Activated B cell treated with CpG ODN at 0.5 μM for 24 hours (primary cell): ENCODE measurements at regions of chr22 and their contacts with region 1.

Region 1: GRCh38 chr22:19970479-19971275 is 29.1 kb upstream of the TXNRD2 start:
- DNase-seq: peak; percentile 74
- ATAC-seq: peak; percentile 87
- H3K4me3 Mint-ChIP-seq: no peak overlapping the region
- H3K27ac Mint-ChIP-seq: no peak overlapping the region
- H3K4me1 Mint-ChIP-seq: peaks cover 9% of the 10 kb centered on the region
- H3K27me3 Mint-ChIP-seq: no peaks in the 10 kb centered on the region
- CTCF ChIP-seq: peak; percentile 43

Region 2: GRCh38 chr22:19705181-19705934 is 265.3 kb before region 1 on chr22:
- CTCF ChIA-PET with region 1: no interaction called
- POLR2A ChIA-PET with region 1: no interaction called
- intact Hi-C with region 1: no loop called
- DNase-seq: no peak
- ATAC-seq: no peak
- H3K4me3 Mint-ChIP-seq: no peak overlapping the region
- H3K27ac Mint-ChIP-seq: no peak overlapping the region
- H3K4me1 Mint-ChIP-seq: no peaks in the 10 kb centered on the region
- H3K27me3 Mint-ChIP-seq: no peaks in the 10 kb centered on the region
- CTCF ChIP-seq: no peak

Region 3: DNA sequence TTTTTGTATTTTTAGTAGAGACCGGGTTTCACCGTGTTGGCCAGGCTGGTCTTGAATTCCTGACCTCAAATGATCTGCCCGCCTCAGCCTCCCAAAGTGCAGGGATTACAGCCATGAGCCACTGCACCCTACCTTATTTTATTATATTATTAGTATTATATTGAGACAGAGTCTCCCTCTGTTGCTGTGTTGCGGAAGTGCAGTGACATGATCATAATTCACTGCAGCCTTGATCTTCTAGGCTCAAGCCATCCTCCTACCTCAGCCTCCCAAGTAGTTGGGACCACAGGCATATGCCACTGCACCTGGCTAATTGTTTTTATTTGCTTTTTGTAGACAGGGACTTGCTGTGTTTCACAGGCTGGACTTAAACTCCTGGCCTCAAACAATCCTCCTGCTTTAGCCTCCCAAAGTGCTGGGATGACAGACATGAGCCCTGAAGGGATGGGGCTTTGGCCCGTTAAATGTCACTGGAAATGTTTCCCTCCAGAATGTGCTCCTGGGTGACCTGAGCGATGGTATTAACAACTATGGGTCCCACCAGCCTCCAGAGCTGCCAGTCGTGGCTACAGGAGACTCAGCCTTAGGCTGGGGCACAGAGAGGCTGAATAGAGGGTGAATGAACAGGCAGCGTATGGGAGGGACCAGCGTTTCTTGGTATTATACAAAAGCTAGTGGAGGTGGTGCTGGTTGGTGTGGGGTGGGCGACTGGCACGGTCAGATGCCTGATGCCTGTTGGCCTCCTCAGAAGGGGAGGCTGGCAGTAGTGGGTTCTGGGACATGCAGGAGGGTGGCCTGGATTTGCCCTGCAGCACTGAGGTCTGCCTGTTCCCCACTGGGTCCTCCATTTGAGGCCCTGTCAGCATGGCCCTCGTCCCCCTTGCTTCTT is 57.5 kb after region 1 on chr22:
- CTCF ChIA-PET with region 1: interaction called, 3 read pairs
- POLR2A ChIA-PET with region 1: interaction called, 3 read pairs
- intact Hi-C with region 1: loop called (anchors 1 kb)
- DNase-seq: no peak
- ATAC-seq: no peak
- H3K4me3 Mint-ChIP-seq: no peak overlapping the region
- H3K27ac Mint-ChIP-seq: no peak overlapping the region
- H3K4me1 Mint-ChIP-seq: peaks cover 54% of the 10 kb centered on the region
- H3K27me3 Mint-ChIP-seq: no peaks in the 10 kb centered on the region
- CTCF ChIP-seq: no peak

Region 4: DNA sequence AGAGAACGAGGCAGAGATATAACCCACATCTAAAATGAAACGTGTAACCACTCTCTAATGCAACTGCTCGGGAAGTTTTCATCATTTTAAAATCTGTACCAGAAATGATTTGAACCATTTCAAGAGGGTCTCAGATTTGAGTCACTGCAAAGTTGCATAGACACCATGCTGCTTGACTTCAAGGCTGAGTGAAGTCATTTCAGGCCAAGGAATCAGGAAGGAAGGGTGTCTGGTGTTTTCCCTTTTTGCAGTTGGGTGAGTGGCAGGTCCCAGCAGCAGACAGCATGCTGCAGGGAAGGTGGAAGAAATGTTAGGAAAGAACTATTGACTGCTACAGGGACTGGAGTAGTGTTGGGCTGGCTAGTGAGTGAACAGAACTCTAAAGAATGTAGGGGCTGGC is 66.7 kb after region 1 on chr22:
- CTCF ChIA-PET with region 1: interaction called, 3 read pairs
- POLR2A ChIA-PET with region 1: no interaction called
- intact Hi-C with region 1: loop called (anchors 2 kb)
- DNase-seq: no peak
- ATAC-seq: peak; percentile 26
- H3K4me3 Mint-ChIP-seq: peak overlapping the region; percentile 56
- H3K27ac Mint-ChIP-seq: peak overlapping the region; percentile 85
- H3K4me1 Mint-ChIP-seq: peaks cover 62% of the 10 kb centered on the region
- H3K27me3 Mint-ChIP-seq: no peaks in the 10 kb centered on the region
- CTCF ChIP-seq: no peak

Region 5: DNA sequence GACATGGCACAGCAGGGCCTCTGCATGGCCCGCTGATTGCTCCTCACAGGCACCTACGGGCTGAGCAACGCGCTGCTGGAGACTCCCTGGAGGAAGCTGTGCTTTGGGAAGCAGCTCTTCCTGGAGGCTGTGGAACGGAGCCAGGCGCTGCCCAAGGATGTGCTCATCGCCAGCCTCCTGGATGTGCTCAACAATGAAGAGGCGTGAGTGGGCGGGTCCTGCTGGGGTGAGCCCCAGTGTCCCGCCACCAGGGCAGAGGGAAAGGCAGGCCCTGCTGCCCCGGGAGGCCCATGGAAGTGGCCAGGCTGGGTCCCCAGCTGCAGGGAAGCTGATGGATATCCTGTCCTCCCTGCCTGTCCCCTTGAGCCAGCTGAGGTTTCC is 90.8 kb after region 1 on chr22:
- CTCF ChIA-PET with region 1: no interaction called
- POLR2A ChIA-PET with region 1: no interaction called
- intact Hi-C with region 1: no loop called
- DNase-seq: no peak
- ATAC-seq: no peak
- H3K4me3 Mint-ChIP-seq: no peak overlapping the region
- H3K27ac Mint-ChIP-seq: no peak overlapping the region
- H3K4me1 Mint-ChIP-seq: no peaks in the 10 kb centered on the region
- H3K27me3 Mint-ChIP-seq: no peaks in the 10 kb centered on the region
- CTCF ChIP-seq: no peak

Region 6: GRCh38 chr22:20093418-20094196 is 122.9 kb after region 1 on chr22:
- CTCF ChIA-PET with region 1: no interaction called
- POLR2A ChIA-PET with region 1: no interaction called
- intact Hi-C with region 1: no loop called
- DNase-seq: no peak
- ATAC-seq: no peak
- H3K4me3 Mint-ChIP-seq: no peak overlapping the region
- H3K27ac Mint-ChIP-seq: no peak overlapping the region
- H3K4me1 Mint-ChIP-seq: no peaks in the 10 kb centered on the region
- H3K27me3 Mint-ChIP-seq: no peaks in the 10 kb centered on the region
- CTCF ChIP-seq: no peak

Region 7: DNA sequence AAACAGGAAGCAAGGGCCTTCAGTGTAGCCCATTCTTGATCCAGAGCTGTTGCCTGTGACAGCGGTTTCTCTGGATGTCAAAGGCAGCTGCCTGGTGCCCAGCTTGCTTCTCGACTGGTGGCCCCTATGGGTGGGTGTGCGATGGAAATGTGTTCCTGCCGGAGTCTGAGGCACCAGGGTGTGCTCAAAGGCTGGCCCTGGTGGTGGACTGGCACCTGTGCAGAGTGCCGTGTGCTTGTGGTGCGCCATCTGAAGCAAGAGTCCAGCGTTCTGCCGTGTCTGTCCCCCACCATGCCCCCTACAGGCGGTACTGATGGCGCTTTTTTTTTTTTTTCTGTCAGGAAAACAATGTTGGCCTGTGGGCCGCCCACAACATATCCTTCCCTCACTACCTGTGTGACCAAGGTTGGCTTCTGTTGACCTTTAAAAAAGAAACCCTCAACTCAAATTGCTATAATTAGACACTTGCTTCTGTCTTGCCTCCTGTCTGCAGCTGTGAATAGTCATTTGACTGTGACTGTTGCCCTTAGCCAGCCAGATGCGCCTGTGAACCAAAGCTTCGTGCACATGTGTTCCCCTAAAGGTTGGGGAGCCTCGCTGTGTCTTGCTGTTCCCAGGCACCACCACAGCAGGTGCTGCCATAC is 140.5 kb after region 1 on chr22:
- CTCF ChIA-PET with region 1: no interaction called
- POLR2A ChIA-PET with region 1: no interaction called
- intact Hi-C with region 1: loop called (anchors 1 kb)
- DNase-seq: no peak
- ATAC-seq: peak; percentile 72
- H3K4me3 Mint-ChIP-seq: no peak overlapping the region
- H3K27ac Mint-ChIP-seq: peak overlapping the region; percentile 53
- H3K4me1 Mint-ChIP-seq: peaks cover 18% of the 10 kb centered on the region
- H3K27me3 Mint-ChIP-seq: no peaks in the 10 kb centered on the region
- CTCF ChIP-seq: no peak

Region 8: DNA sequence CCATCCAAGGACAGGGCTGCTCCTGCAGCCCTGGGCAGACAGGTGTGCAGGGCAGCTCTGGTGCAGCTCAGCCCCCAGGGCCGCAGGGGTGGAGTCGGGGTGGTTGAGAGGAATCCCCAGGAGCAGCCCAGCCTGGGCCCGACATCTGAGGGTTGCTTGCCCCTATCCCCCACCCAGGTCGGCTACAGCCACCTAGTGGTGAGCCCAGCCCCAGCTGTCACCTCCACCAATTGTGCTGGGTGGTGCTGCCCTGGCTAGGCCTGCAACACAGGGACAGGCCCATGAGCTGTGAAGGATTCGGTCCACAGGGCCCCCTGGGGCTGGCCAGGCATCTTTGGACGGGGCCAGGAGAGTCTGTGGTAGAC is 267.8 kb after region 1 on chr22:
- CTCF ChIA-PET with region 1: no interaction called
- POLR2A ChIA-PET with region 1: no interaction called
- intact Hi-C with region 1: loop called (anchors 1 kb)
- DNase-seq: peak; percentile 39
- ATAC-seq: peak; percentile 85
- H3K4me3 Mint-ChIP-seq: no peak overlapping the region
- H3K27ac Mint-ChIP-seq: no peak overlapping the region
- H3K4me1 Mint-ChIP-seq: peaks cover 14% of the 10 kb centered on the region
- H3K27me3 Mint-ChIP-seq: no peaks in the 10 kb centered on the region
- CTCF ChIP-seq: no peak

Region 9: DNA sequence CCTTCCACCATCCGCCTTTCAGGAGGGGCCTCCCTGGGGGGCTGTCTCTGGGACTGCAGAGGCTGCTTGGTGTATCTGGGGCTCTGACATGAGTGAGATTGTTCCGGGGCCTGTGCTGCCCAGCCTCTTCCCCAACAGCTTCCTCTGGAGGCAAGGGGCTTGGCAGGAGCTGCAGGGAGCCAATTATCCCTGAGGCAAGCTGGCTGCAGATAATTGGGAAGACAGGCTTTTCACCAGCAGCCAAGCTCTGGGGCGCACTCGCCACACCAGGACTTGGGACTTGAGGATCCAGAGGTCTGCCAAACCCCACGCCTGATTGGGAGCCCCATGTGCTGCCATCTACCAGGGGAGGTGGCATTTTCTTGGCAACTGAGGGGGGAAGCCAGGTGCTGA is 313.0 kb after region 1 on chr22:
- CTCF ChIA-PET with region 1: no interaction called
- POLR2A ChIA-PET with region 1: no interaction called
- intact Hi-C with region 1: loop called (anchors 1 kb)
- DNase-seq: no peak
- ATAC-seq: no peak
- H3K4me3 Mint-ChIP-seq: no peak overlapping the region
- H3K27ac Mint-ChIP-seq: no peak overlapping the region
- H3K4me1 Mint-ChIP-seq: peaks cover 9% of the 10 kb centered on the region
- H3K27me3 Mint-ChIP-seq: no peaks in the 10 kb centered on the region
- CTCF ChIP-seq: no peak